Left ventricle myocardium superior (tissue), 1 donor: ENCODE measurements at regions of chr5 and their contacts with region 1.

Region 1: GRCh38 chr5:73792687-73793320 is 166.8 kb downstream of the ARHGEF28 start:
- DNase-seq: peak; percentile 74
- ATAC-seq: peak; percentile 80

Region 2: GRCh38 chr5:73591102-73591695 is 201.6 kb before region 1 on chr5:
- intact Hi-C with region 1: loop called (anchors 1 kb)
- DNase-seq: no peak
- ATAC-seq: peak; percentile 68